Naive thymus-derived CD8-positive, alpha-beta T cell (primary cell): ENCODE measurements at regions of chr19 and their contacts with region 1.

Region 1: GRCh38 chr19:49877020-49877878 is at the starts of genes AKT1S1 and TBC1D17:
- DNase-seq: peak; percentile 91 to 100 (median 99)
- ATAC-seq: peak; percentile 67 to 72
- H3K4me3 Mint-ChIP-seq: no peak within 1 kb of the TSS
- H3K27ac Mint-ChIP-seq: no peak within 1 kb of the TSS
- H3K4me1 Mint-ChIP-seq: peaks cover 15 to 33% (median 22%) of the 10 kb centered on the region in 4 donors
- H3K27me3 Mint-ChIP-seq: no peaks in the 10 kb centered on the region
- polyA plus RNA-seq, gene AKT1S1: 2.6 to 4.5 (median 3.9) TPM
- polyA plus RNA-seq, gene TBC1D17: 8.1 to 17.7 (median 11.3) TPM

Region 2: GRCh38 chr19:49640113-49640898 is 236.9 kb before region 1 on chr19 and contains the start of gene RRAS:
- POLR2A ChIA-PET with region 1: interaction called, 16 read pairs
- DNase-seq: peak; percentile 94 to 100 (median 99)
- ATAC-seq: peak; percentile 67 to 73
- H3K4me3 Mint-ChIP-seq: peak within 1 kb of the TSS; percentile 87 to 98 (median 94)
- H3K27ac Mint-ChIP-seq: peak within 1 kb of the TSS; percentile 94 to 99 (median 97)
- H3K4me1 Mint-ChIP-seq: peaks cover 45 to 68% (median 58%) of the 10 kb centered on the region in 4 donors
- H3K27me3 Mint-ChIP-seq: no peaks in the 10 kb centered on the region
- polyA plus RNA-seq, gene RRAS: 21.8 to 30.2 (median 28.4) TPM

Region 3: DNA sequence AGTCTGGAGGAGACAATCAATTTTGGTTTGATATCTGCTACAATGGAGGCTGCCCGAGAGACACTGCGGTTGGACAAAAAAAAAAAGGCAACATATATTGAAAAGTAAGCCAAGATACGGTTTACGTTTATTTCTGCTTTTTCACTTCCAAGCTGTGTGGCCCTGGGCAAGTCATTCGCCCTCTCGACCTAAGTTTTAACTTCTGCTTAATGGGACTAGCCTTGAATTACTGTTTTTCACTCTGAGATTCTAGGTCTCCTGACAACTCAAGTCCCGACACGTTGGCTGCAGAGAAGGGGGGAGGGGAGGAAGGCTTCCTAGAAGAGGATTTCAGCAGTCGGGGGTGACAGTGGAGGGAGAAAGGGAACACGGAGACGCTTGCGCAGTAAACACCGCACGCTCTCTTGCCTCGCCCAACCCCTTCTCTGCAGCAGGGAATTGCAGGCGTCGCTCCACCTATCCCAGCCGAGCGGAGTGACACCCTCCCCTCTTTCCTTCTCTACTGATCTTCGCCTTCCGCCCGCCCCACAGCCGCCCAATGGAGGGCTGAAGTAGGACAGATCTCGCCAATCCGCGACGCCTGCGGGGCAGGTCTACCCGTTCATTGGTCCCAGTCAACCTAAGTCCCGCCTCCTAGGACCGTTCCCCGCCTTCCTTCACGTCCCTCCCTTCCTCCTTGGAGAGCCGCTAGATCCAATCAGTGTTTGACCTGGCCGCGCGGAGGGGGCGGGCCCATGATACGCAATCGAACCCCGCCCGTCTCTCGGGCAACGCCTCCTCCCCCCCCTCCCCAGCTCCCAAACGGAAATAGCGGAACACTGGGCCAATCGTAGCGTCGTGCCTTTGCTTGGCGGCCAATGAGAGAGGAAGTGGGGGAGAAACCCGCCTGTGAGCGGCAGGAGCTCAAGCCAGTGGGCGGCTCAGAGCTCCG is 111.0 kb before region 1 on chr19:
- POLR2A ChIA-PET with region 1: interaction called, 10 read pairs
- DNase-seq: peak; percentile 95 to 100 (median 99)
- ATAC-seq: peak; percentile 88 to 90
- H3K4me3 Mint-ChIP-seq: peak overlapping the region; percentile 77 to 96 (median 92)
- H3K27ac Mint-ChIP-seq: peak overlapping the region; percentile 87 to 97 (median 96)
- H3K4me1 Mint-ChIP-seq: peaks cover 31 to 42% (median 36%) of the 10 kb centered on the region in 4 donors
- H3K27me3 Mint-ChIP-seq: peaks cover 0 to 4% (median 0%) of the 10 kb centered on the region in 5 donors

Region 4: GRCh38 chr19:49827034-49827433 is 50.2 kb before region 1 on chr19:
- POLR2A ChIA-PET with region 1: no interaction called
- DNase-seq: no peak
- ATAC-seq: no peak
- H3K4me3 Mint-ChIP-seq: no peak overlapping the region
- H3K27ac Mint-ChIP-seq: peak overlapping the region in 1 of 10 donors; percentile 19
- H3K4me1 Mint-ChIP-seq: peaks cover 0 to 13% (median 5%) of the 10 kb centered on the region in 4 donors
- H3K27me3 Mint-ChIP-seq: no peaks in the 10 kb centered on the region

Region 5: GRCh38 chr19:49850473-49851342 is 26.5 kb before region 1 on chr19 and contains the start of gene PTOV1:
- POLR2A ChIA-PET with region 1: interaction called, 53 read pairs
- DNase-seq: peak; percentile 82 to 93 (median 88)
- ATAC-seq: peak; percentile 74 to 89
- H3K4me3 Mint-ChIP-seq: peak within 1 kb of the TSS; percentile 88 to 97 (median 92)
- H3K27ac Mint-ChIP-seq: peak within 1 kb of the TSS; percentile 83 to 99 (median 97)
- H3K4me1 Mint-ChIP-seq: peaks cover 19 to 44% (median 31%) of the 10 kb centered on the region in 4 donors
- H3K27me3 Mint-ChIP-seq: no peaks in the 10 kb centered on the region
- polyA plus RNA-seq, gene PTOV1: 42.9 to 67.4 (median 50.9) TPM

Region 6: DNA sequence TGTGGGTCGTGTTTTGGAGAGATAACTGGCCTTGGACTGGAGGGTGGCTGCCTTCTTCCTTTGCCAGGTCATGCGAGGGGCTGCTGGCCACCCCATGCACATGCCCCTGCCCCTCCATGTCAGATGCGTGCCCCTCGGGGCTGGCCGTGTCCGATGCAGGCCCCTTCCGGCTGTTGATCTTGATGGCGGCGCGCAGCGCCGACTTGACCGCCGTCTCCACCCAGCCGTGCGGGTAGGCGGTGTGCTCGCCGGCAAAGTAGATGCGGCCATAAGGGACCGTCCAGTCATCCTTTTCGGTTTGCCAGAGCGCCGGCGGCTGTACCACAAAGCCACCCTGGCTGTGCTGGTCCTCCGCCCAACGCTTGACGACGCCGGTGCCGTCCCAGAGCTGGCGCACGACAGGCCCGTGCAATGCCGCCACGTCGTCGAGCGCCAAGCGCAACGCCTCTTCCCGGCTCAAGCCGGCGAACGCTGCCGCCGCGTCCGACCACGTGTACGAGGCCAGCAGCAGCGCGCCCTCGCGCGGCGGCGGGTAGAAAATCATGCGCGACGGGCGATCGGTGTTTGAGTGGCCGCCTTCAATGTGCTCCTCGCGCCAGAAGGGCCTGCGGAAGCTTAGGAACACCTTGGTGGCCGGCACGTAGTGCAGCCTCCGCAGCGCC is 12.6 kb after region 1 on chr19:
- POLR2A ChIA-PET with region 1: interaction called, 20 read pairs
- DNase-seq: peak; percentile 57 to 85 (median 74)
- ATAC-seq: peak; percentile 80 to 82
- H3K4me3 Mint-ChIP-seq: peak overlapping the region; percentile 72 to 84 (median 81)
- H3K27ac Mint-ChIP-seq: peak overlapping the region in 3 of 10 donors; percentile 15 to 72 (median 58)
- H3K4me1 Mint-ChIP-seq: peaks cover 0 to 9% (median under 1%) of the 10 kb centered on the region in 4 donors
- H3K27me3 Mint-ChIP-seq: no peaks in the 10 kb centered on the region